Spleen (tissue), 13 donors: ENCODE measurements at regions of chr1 and their contacts with region 1.

Region 1: DNA sequence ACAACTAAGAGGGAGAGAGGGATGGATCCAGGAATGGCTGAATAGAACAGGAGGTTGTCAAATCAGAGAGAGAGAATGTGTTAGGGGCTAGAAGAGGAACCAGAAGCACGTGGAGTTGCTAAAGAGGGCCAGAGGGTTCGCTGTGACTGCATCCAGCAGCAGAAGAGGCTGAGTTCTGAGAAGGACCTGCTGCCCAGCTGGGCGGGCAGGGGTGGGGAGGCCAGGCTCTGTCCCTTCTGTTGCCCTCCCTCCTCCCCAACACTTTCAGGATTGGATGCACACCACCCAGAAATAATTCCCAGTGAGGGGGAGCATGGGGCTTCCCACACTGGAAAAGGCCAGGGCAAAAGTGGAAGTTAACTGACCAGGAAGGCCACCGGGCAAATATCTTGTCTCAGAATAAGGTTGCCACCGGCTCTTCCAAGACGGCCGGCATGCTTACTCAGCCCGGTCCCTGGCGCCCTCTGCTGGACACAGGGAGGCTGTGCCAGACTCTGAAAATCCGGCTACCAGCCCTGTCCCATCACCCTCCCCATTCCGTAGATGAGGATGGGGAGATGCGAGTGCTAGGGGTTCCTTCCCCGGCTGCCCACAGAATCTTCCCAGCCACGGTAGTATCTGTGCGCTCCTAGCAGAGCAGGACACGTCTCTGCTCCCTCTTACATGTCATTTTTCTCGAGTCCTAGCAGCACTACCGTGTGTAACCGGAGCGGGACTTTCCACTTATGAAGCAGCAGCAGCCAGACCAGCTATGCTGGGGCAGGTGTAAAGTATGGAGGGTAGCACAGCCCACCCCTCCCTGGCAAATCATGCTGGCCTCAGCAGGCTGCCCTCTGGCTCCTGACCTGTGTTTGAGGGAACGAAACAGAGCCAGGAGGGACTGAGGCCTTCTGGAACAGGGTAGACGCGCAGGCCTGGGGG is 46.8 kb upstream of the A3GALT2 start:
- DNase-seq: peak; percentile 97
- H3K4me3 ChIP-seq: peak overlapping the region in 1 of 8 donors; percentile 21
- H3K27ac ChIP-seq: peak overlapping the region in 4 of 8 donors; percentile 43 to 70 (median 58)
- H3K4me1 ChIP-seq: peaks cover 8 to 43% (median 19%) of the 10 kb centered on the region in 6 donors
- H3K27me3 ChIP-seq: peaks cover 0 to 7% (median 0%) of the 10 kb centered on the region in 7 donors
- CTCF ChIP-seq: peak; percentile 90 to 99 (median 96)
- POLR2A ChIP-seq: no peak

Region 2: DNA sequence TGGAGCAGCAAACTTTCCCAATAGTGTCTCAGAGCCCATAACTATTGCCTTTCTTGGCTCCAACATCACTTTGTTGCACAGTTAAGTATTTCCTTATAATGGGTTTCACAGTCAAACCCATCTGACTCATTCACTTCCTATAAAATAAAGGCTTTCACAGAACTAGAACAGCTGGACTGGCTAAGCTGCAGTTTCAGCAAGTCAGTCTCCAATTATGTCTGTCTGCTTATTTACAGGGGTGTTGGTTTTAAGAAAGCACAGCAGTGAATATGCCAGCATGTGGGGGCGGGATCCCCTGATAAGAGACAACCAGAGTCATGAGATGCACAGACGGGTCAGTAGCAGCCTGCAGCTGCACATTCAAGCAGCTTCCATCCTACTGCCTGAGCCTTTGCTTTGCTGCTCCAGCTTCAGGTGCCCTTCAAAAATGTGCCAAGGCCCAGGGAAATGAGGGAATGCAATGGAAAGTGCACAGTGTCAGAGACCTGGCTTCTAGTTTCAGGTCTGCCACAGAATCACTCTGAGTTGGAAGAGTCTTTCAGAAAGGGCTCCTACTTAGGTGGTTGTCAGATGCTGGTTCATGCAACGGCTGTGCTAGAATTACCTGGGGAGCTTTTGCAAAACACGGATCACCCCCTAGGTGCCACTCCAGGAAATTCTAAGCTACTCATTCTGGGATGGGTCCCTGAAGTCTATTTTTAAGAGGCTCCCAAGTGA is 427.9 kb before region 1 on chr1:
- intact Hi-C with region 1: no loop called
- DNase-seq: no peak
- H3K4me3 ChIP-seq: no peak overlapping the region
- H3K27ac ChIP-seq: peak overlapping the region in 4 of 8 donors; percentile 24 to 53 (median 27)
- H3K4me1 ChIP-seq: peaks cover 0 to 22% (median 7%) of the 10 kb centered on the region in 6 donors
- H3K27me3 ChIP-seq: no peaks in the 10 kb centered on the region
- CTCF ChIP-seq: no peak
- POLR2A ChIP-seq: no peak

Region 3: GRCh38 chr1:33094971-33095604 is 272.7 kb before region 1 on chr1:
- intact Hi-C with region 1: loop called (anchors 10 kb)
- DNase-seq: no peak
- H3K4me3 ChIP-seq: no peak overlapping the region
- H3K27ac ChIP-seq: no peak overlapping the region
- H3K4me1 ChIP-seq: peaks cover 9 to 37% (median 19%) of the 10 kb centered on the region in 6 donors
- H3K27me3 ChIP-seq: no peaks in the 10 kb centered on the region
- CTCF ChIP-seq: peak; percentile 58 to 97 (median 86)
- POLR2A ChIP-seq: no peak

Region 4: GRCh38 chr1:33295450-33296081 is 72.2 kb before region 1 on chr1:
- intact Hi-C with region 1: loop called (anchors 5 kb)
- DNase-seq: peak; percentile 96
- H3K4me3 ChIP-seq: no peak overlapping the region
- H3K27ac ChIP-seq: peak overlapping the region in 5 of 8 donors; percentile 5 to 49 (median 40)
- H3K4me1 ChIP-seq: peaks cover 0 to 44% (median 25%) of the 10 kb centered on the region in 6 donors
- H3K27me3 ChIP-seq: no peaks in the 10 kb centered on the region
- CTCF ChIP-seq: peak; percentile 94 to 100 (median 98)
- POLR2A ChIP-seq: no peak

Region 5: DNA sequence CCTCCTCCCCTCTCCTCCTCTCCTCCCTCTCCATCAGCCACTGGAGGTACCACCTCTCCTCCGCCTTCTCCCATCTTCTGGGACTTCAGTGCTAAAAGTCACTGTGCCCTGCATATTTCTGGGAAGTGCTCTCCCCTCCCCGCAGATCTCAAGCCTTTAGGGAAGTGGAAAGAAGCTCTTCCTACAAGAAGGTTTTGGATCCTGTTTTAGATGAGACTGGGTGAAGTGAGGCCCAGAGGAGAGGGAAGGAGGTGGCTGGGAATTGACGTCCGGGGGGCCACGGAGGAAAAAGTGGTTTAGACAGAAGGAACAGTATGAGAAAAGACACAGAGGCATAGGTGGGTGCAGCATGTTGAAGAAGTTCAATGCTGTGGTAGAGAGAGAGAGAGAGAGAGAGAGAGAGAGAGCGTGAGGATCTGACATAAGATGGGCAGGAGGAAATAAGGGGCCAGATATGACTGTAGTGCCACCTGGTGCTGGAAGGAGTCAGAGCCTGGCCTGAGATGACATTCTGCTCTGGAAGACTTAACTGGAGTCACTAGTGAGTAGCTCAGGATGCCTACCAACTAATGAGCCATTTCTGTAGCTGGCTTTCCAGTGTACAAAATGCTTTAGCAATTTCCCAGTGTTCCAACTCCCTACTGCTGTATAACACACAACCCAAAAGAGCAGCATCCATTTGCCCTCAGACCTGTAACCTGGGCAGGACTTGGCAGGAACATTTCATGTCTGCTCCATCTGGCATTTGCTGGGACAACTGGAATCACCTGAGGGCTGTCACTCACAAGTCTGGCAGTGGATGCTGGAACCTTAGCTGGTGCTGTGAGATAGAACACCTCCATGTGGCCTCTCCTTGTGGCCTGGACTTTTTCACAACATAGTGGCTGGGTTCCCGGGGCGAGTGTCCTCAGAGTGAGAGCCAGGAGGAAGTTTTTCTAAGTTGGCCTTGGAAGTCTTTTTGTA is 88.1 kb after region 1 on chr1:
- intact Hi-C with region 1: loop called (anchors 10 kb)
- DNase-seq: no peak
- H3K4me3 ChIP-seq: no peak overlapping the region
- H3K27ac ChIP-seq: peak overlapping the region in 1 of 8 donors; percentile 20
- H3K4me1 ChIP-seq: peaks cover 6 to 35% (median 21%) of the 10 kb centered on the region in 6 donors
- H3K27me3 ChIP-seq: no peaks in the 10 kb centered on the region
- CTCF ChIP-seq: peak in 10 of 11 experiments; percentile 30 to 77 (median 59)
- POLR2A ChIP-seq: no peak